Common myeloid progenitor, CD34-positive (primary cell): ENCODE measurements at regions of chr11 and their contacts with region 1.

Region 1: GRCh38 chr11:64341851-64342791 is 2.1 kb downstream of the CCDC88B start:
- DNase-seq: peak; percentile 88 to 93 (median 92)
- H3K4me3 ChIP-seq: peak overlapping the region in 3 of 7 experiments; percentile 4 to 62 (median 45)
- H3K27ac ChIP-seq: peak overlapping the region in 1 of 2 experiments; percentile 58
- H3K4me1 ChIP-seq: peaks cover 5 to 44% (median 35%) of the 10 kb centered on the region in 4 experiments
- H3K27me3 ChIP-seq: no peaks in the 10 kb centered on the region

Region 2: DNA sequence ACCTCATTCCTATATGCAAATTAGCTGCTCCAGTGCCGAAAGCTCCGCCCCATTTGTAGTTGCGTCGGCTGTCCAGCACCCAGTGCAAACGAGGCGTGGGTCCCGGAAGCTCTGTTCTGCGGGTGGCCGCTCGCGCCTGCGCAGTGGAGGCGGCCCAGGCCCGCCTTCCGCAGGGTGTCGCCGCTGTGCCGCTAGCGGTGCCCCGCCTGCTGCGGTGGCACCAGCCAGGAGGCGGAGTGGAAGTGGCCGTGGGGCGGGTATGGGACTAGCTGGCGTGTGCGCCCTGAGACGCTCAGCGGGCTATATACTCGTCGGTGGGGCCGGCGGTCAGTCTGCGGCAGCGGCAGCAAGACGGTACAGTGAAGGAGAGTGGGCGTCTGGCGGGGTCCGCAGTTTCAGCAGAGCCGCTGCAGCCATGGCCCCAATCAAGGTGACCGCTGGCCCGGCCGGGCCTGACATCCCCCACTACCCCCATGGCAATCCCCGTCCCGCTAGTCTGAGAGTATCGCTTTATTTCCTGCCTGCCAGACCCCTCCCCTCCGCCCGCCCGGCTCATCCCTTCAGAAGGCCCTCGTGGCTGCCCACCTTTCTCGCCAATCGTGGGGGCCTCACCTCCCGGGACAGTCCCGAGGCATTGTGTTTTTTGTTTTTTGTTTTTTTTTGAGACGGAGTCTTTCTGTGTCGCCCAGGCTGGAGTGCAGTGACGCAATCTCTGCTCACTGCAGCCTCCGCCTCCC is 24.0 kb before region 1 on chr11 and contains the start of gene PRDX5:
- CTCF ChIA-PET with region 1: interaction called, 15 read pairs
- POLR2A ChIA-PET with region 1: interaction called, 10 read pairs
- DNase-seq: peak; percentile 95 to 98 (median 98)
- H3K4me3 ChIP-seq: peak within 1 kb of the TSS; percentile 64 to 91 (median 86)
- H3K27ac ChIP-seq: peak within 1 kb of the TSS; percentile 87 to 95
- H3K4me1 ChIP-seq: peaks cover 0 to 29% (median 27%) of the 10 kb centered on the region in 4 experiments
- H3K27me3 ChIP-seq: no peaks in the 10 kb centered on the region

Region 3: GRCh38 chr11:64331557-64332371 is 10.4 kb before region 1 on chr11:
- CTCF ChIA-PET with region 1: interaction called, 33 read pairs
- POLR2A ChIA-PET with region 1: interaction called, 5 read pairs
- DNase-seq: peak; percentile 94 to 98 (median 97)
- H3K4me3 ChIP-seq: peak overlapping the region in 3 of 7 experiments; percentile 8 to 36 (median 15)
- H3K27ac ChIP-seq: peak overlapping the region in 1 of 2 experiments; percentile 27
- H3K4me1 ChIP-seq: peaks cover 0 to 40% (median 20%) of the 10 kb centered on the region in 4 experiments
- H3K27me3 ChIP-seq: no peaks in the 10 kb centered on the region

Region 4: DNA sequence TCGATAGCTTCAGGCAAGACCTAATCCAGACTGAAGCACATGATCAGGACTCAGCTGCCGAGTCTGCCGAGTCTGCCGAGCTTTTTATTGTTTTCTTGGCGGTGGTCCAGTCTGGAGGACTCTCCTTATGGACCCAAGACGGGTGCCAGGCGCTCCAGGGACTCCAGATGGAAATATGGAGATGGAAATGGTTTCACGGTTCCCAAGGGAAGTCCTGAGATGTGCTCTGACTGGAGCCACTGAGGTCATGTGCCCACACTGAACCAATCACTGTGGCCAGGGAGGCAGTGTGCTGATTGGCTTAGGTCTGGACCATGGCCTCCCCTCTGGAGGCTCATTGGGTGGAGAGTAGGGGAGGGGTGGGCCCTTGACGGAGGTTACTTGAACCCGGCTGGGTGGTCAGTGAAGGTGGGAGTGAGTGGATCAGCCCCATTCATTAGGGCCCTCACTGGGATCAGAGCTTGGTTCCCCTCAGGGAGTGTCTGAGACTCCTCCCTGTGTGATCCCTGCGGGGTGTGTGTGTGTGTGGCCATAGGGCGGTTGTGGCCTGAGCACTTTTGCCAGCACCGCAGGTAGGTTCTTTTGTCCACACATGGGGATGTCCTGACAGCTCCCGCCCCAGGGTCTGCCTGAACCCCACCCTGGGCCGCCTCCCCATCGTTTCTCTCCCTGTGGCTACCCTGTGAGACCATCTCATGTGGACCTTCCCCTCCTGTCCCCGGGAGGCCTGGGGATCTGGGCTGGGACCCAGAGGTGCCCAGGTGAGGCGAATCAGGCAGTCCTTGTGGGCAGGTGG is 30.9 kb after region 1 on chr11:
- CTCF ChIA-PET with region 1: no interaction called
- POLR2A ChIA-PET with region 1: no interaction called
- DNase-seq: no peak
- H3K4me3 ChIP-seq: no peak overlapping the region
- H3K27ac ChIP-seq: no peak overlapping the region
- H3K4me1 ChIP-seq: peaks cover 0 to 12% (median 7%) of the 10 kb centered on the region in 4 experiments
- H3K27me3 ChIP-seq: no peaks in the 10 kb centered on the region